PC-3 (cell line): ENCODE measurements at regions of chr17 and their contacts with region 1.

Region 1: GRCh38 chr17:50798424-50799288 is 31.3 kb upstream of the ANKRD40CL start:
- DNase-seq: no peak
- ATAC-seq: peak; percentile 26; the same call in 1 of the 2 replicates
- H3K4me3 ChIP-seq: no peak overlapping the region
- H3K27ac ChIP-seq: no peak overlapping the region
- H3K4me1 ChIP-seq: no peaks in the 10 kb centered on the region
- H3K27me3 ChIP-seq: no peaks in the 10 kb centered on the region
- CTCF ChIP-seq: no peak

Region 2: DNA sequence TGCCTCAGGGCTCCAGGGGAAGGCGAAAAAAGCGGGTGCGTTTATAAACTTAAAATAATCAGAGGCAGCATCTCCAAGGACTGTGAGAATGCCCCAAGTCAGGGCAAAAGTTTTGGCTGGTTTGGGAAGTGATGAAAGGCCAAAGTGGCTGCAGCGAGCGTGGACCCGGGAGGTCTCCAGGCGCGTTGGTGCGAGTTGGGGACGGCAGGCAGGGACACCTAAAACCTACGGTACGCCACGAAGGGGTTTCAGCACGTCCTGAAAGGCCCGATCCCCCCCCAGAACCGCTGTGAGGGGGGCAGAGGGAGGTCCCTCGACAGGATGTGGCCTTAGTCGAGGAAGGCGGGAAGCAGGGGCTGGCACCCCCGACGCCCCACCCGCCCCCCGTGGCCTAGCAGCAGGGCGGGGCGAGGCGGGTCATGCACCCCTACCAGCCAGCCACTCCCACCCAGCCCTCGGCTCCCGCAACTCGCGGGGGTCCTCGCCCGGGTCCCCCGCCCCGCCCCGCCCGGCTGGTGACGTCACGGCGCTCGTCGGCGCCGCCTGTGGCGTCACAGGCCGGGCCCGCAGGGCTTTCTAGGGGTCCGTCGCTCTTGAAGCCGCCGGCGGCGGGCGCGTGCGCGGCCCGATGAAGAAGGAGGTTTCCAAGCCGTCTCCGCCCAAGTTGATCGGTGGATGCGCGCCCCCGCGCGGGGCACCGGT is 290.6 kb before region 1 on chr17 and contains the start of gene MYCBPAP:
- CTCF ChIA-PET with region 1: interaction called, 12 read pairs
- POLR2A ChIA-PET with region 1: no interaction called
- intact Hi-C with region 1: no loop called
- DNase-seq: peak; percentile 61
- ATAC-seq: peak; percentile 85
- H3K4me3 ChIP-seq: peak within 1 kb of the TSS; percentile 63
- H3K27ac ChIP-seq: no peak within 1 kb of the TSS
- H3K4me1 ChIP-seq: peaks cover 15% of the 10 kb centered on the region
- H3K27me3 ChIP-seq: no peaks in the 10 kb centered on the region
- CTCF ChIP-seq: peak; percentile 44
- total RNA-seq, gene MYCBPAP: 0.29 and 1.9 TPM in 2 replicates